ENCODE measurements at regions of chr19 and their contacts with region 1.

Region 1: GRCh38 chr19:18251587-18252369 is 22.5 kb downstream of the IQCN start:
- DNase-seq: peak; percentile 78
- ATAC-seq: peak; percentile 76
- H3K4me3 ChIP-seq: no peak overlapping the region
- H3K27ac ChIP-seq: no peak overlapping the region
- H3K4me1 ChIP-seq: no peaks in the 10 kb centered on the region
- H3K27me3 ChIP-seq: no peaks in the 10 kb centered on the region
- CTCF ChIP-seq: peak; percentile 90

Region 2: GRCh38 chr19:18152444-18152816 is 99.3 kb before region 1 on chr19:
- intact Hi-C with region 1: no loop called
- DNase-seq: peak; percentile 96
- ATAC-seq: peak; percentile 68
- H3K4me3 ChIP-seq: peak overlapping the region; percentile 81
- H3K27ac ChIP-seq: peak overlapping the region; percentile 96
- H3K4me1 ChIP-seq: peaks cover 38% of the 10 kb centered on the region
- H3K27me3 ChIP-seq: no peaks in the 10 kb centered on the region
- CTCF ChIP-seq: peak; percentile 60

Region 3: DNA sequence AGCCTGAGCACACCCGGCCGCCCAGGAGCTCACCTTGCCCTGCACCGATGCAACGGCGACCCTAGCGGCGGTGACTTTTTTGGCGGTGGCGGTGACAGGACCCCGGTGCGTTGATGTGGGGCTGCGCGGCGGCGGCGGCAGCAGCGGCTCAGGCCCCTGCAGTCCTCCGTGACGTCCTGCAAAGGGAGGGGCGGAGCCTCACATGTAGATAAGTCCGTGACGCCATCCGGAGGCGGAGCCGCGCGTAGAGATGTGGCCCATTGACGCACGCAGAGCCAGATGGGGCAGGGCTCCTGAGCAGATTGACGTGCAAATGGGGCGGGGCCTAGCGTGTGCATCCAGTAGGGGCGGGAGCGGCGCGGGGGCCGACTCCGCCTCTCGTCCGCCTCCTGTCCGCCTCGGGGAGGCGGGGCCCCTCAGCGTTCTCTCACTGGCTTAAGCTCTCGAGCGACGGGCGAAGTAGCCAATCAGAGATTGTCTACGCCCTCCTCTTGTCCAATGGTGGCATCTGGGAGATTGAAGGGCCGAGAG is 47.9 kb before region 1 on chr19 and contains the start of gene RAB3A:
- intact Hi-C with region 1: loop called (anchors 10 kb)
- DNase-seq: peak; percentile 100
- ATAC-seq: peak; percentile 97
- H3K4me3 ChIP-seq: peak within 1 kb of the TSS; percentile 71
- H3K27ac ChIP-seq: peak within 1 kb of the TSS; percentile 95
- H3K4me1 ChIP-seq: peaks cover 21% of the 10 kb centered on the region
- H3K27me3 ChIP-seq: no peaks in the 10 kb centered on the region
- CTCF ChIP-seq: no peak
- total RNA-seq, gene RAB3A: 1.9 TPM

Measured in upper lobe of right lung (tissue), 1 donor.